ENCODE measurements at regions of chr9 and their contacts with region 1.

Region 1: DNA sequence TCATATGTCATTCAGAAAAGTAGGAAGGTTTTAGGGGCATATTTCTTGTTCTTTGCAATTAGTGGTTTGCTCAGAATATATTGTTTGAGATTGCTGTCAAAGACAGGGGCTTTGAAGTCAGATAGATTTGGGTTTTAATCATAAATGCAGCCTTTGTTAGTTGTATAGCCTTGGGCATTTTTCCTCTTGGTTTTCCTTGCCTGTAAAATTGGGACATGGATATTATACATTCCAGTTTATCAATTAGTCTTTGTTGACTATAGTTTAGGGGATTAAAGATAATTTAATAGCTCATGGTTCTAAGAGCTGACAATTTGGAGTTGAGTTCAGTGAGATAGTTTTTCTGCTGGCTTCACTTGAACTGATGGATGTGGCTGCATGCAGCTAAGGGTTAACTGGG is 88.9 kb downstream of the DMAC1 start:
- DNase-seq: no peak
- ATAC-seq: no peak
- H3K4me3 ChIP-seq: no peak overlapping the region
- H3K4me3 Mint-ChIP-seq: no peak overlapping the region
- H3K27ac ChIP-seq: no peak overlapping the region
- H3K27ac Mint-ChIP-seq: no peak overlapping the region
- H3K4me1 ChIP-seq: no peaks in the 10 kb centered on the region
- H3K4me1 Mint-ChIP-seq: no peaks in the 10 kb centered on the region
- H3K27me3 ChIP-seq: no peaks in the 10 kb centered on the region
- H3K27me3 Mint-ChIP-seq: no peaks in the 10 kb centered on the region
- CTCF ChIP-seq: no peak

Region 2: GRCh38 chr9:7554699-7555098 is 156.0 kb before region 1 on chr9:
- CTCF ChIA-PET with region 1: no interaction called
- POLR2A ChIA-PET with region 1: no interaction called
- intact Hi-C with region 1: no loop called
- DNase-seq: no peak
- ATAC-seq: no peak
- H3K4me3 ChIP-seq: no peak overlapping the region
- H3K4me3 Mint-ChIP-seq: no peak overlapping the region
- H3K27ac ChIP-seq: no peak overlapping the region
- H3K27ac Mint-ChIP-seq: no peak overlapping the region
- H3K4me1 ChIP-seq: no peaks in the 10 kb centered on the region
- H3K4me1 Mint-ChIP-seq: no peaks in the 10 kb centered on the region
- H3K27me3 ChIP-seq: no peaks in the 10 kb centered on the region
- H3K27me3 Mint-ChIP-seq: no peaks in the 10 kb centered on the region
- CTCF ChIP-seq: no peak

Region 3: GRCh38 chr9:7656636-7657035 is 54.0 kb before region 1 on chr9:
- CTCF ChIA-PET with region 1: no interaction called
- POLR2A ChIA-PET with region 1: no interaction called
- intact Hi-C with region 1: loop called in 1 of 2 experiments (anchors 10 kb)
- DNase-seq: no peak
- ATAC-seq: no peak
- H3K4me3 ChIP-seq: no peak overlapping the region
- H3K4me3 Mint-ChIP-seq: no peak overlapping the region
- H3K27ac ChIP-seq: no peak overlapping the region
- H3K27ac Mint-ChIP-seq: no peak overlapping the region
- H3K4me1 ChIP-seq: no peaks in the 10 kb centered on the region
- H3K4me1 Mint-ChIP-seq: peaks cover 5% of the 10 kb centered on the region
- H3K27me3 ChIP-seq: no peaks in the 10 kb centered on the region
- H3K27me3 Mint-ChIP-seq: no peaks in the 10 kb centered on the region
- CTCF ChIP-seq: no peak

Region 4: GRCh38 chr9:7770111-7770510 is 59.4 kb after region 1 on chr9:
- CTCF ChIA-PET with region 1: no interaction called
- POLR2A ChIA-PET with region 1: no interaction called
- intact Hi-C with region 1: no loop called
- DNase-seq: no peak
- ATAC-seq: no peak
- H3K4me3 ChIP-seq: no peak overlapping the region
- H3K4me3 Mint-ChIP-seq: no peak overlapping the region
- H3K27ac ChIP-seq: no peak overlapping the region
- H3K27ac Mint-ChIP-seq: no peak overlapping the region
- H3K4me1 ChIP-seq: no peaks in the 10 kb centered on the region
- H3K4me1 Mint-ChIP-seq: no peaks in the 10 kb centered on the region
- H3K27me3 ChIP-seq: no peaks in the 10 kb centered on the region
- H3K27me3 Mint-ChIP-seq: peaks cover 9% of the 10 kb centered on the region
- CTCF ChIP-seq: no peak